Mammary epithelial cell (primary cell): ENCODE measurements at regions of chr21 and their contacts with region 1.

Region 1: GRCh38 chr21:14751602-14752344 is 205.7 kb upstream of the SAMSN1 start:
- DNase-seq: no peak
- H3K4me3 ChIP-seq: no peak overlapping the region
- H3K27ac ChIP-seq: no peak overlapping the region
- H3K4me1 ChIP-seq: no peaks in the 10 kb centered on the region
- H3K27me3 ChIP-seq: peaks cover 6% of the 10 kb centered on the region
- CTCF ChIP-seq: no peak

Region 2: GRCh38 chr21:15390049-15390448 is 638.3 kb after region 1 on chr21:
- CTCF ChIA-PET with region 1: interaction called, 17 read pairs
- dilution Hi-C with region 1: no loop called
- in situ Hi-C with region 1: no loop called
- intact Hi-C with region 1: no loop called
- DNase-seq: peak; percentile 64
- H3K4me3 ChIP-seq: no peak overlapping the region
- H3K27ac ChIP-seq: no peak overlapping the region
- H3K4me1 ChIP-seq: peaks cover 4% of the 10 kb centered on the region
- H3K27me3 ChIP-seq: no peaks in the 10 kb centered on the region
- CTCF ChIP-seq: no peak